GM10248 (cell line): ENCODE measurements at regions of chr12 and their contacts with region 1.

Region 1: DNA sequence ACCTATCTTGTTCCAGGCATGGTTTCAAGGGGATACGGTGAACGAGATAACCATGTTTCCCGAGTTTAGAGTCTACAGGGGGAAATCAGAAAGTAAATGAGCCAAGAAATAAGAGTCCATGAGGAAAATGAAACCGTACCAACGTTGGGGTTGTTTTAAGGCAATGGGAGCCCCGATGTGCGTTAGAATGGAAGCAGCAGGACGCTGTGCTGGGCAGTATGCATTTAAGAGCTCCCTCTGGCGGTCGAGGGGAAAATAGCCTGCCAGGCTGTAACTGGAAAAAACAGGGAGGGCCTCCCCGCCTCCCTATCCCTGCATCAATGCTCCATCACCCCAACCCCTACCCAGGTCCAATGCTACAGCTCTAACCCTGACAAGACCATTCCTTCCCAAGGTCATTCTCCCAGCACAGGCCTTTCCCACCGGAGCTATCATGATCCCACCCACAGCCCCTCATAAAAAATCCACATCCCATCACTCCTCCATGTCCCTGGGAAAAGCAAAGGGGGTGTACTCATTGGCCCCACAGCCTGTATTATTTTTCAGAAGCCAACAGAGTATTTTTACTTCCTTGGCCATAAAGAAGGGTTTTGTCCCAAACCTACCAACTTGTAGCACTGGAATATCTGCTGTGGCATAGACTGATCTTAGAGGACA is 226.3 kb upstream of the NOS1 start:
- DNase-seq: peak; percentile 68
- CTCF ChIP-seq: peak; percentile 83

Region 2: GRCh38 chr12:117236456-117237001 is 351.2 kb before region 1 on chr12:
- CTCF ChIA-PET with region 1: interaction called, 23 read pairs
- POLR2A ChIA-PET with region 1: no interaction called
- DNase-seq: peak; percentile 75
- CTCF ChIP-seq: peak; percentile 68

Region 3: DNA sequence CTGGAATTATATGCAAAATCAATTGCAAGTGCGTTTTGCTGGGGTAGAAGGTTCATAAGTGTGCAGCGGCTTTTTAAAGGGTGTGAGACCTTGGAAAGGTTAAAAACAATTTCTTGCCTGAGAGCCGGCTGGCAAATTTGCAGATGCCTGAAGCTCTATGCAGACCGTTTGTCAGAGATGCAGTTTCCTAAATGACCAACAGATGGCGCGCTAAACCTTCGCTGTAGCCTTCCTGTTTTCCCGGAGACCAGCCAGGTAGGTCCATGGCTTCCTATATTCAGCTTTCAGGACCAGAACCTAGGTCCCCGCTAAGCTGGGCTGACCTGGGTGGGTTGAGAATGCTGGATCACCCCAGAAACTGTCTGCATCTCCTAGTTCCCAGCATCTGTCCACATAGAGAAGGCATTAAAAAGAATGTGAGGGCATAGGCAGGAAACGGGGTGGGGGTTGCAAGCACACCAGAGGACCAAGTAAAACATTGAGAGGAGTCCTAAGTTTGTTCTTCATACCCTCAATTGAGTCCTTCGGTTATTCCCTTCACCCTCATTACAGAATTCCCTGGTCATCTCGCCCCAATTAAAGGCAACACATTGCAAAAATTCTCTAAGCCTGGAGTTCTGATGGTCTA is 220.6 kb before region 1 on chr12:
- CTCF ChIA-PET with region 1: interaction called, 82 read pairs
- POLR2A ChIA-PET with region 1: no interaction called
- DNase-seq: peak; percentile 75
- CTCF ChIP-seq: peak; percentile 79

Region 4: GRCh38 chr12:117540011-117540410 is 47.7 kb before region 1 on chr12:
- CTCF ChIA-PET with region 1: interaction called, 10 read pairs
- POLR2A ChIA-PET with region 1: no interaction called
- DNase-seq: no peak
- CTCF ChIP-seq: no peak

Region 5: DNA sequence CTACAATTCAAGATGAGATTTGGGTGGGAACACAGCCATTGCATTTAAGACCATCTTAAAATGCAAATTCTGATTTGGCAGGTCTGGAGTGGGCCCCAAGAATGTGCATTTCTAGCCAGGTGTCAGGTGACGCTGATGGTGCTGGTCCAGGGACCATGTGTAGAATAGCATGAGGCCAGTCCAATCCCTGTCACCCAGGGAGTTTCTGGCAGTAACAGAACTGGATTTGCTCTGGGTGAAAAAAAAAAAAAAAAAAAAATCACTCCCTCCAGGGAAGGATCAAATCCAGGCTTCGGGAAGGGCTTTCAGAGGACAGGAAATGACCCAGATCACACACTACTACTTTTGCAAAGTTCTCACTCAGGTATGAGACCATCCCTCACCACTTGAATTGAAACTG is 13.1 kb before region 1 on chr12:
- CTCF ChIA-PET with region 1: interaction called, 17 read pairs
- POLR2A ChIA-PET with region 1: no interaction called
- DNase-seq: no peak
- CTCF ChIP-seq: no peak

Region 6: DNA sequence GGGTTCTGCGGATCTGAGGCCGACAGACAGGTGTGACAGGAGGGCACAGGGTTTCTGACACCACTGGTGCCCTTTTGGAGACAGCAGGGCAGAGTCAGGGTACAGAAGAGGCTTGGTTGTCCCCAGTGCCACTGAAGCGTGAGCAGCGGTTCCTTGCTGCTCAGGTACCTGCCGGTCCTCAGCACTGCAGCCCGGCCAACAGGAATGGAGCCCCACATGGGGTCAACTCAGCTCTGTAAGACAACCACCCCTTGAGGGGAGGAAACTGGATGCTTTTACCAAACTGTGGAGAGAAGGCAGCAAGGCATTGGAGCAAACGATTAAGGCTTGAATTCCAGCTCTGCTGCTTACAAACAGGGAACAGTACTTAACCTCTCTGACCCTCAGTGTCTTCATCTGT is 20.0 kb after region 1 on chr12:
- CTCF ChIA-PET with region 1: interaction called, 17 read pairs
- POLR2A ChIA-PET with region 1: no interaction called
- DNase-seq: no peak
- CTCF ChIP-seq: no peak

Region 7: DNA sequence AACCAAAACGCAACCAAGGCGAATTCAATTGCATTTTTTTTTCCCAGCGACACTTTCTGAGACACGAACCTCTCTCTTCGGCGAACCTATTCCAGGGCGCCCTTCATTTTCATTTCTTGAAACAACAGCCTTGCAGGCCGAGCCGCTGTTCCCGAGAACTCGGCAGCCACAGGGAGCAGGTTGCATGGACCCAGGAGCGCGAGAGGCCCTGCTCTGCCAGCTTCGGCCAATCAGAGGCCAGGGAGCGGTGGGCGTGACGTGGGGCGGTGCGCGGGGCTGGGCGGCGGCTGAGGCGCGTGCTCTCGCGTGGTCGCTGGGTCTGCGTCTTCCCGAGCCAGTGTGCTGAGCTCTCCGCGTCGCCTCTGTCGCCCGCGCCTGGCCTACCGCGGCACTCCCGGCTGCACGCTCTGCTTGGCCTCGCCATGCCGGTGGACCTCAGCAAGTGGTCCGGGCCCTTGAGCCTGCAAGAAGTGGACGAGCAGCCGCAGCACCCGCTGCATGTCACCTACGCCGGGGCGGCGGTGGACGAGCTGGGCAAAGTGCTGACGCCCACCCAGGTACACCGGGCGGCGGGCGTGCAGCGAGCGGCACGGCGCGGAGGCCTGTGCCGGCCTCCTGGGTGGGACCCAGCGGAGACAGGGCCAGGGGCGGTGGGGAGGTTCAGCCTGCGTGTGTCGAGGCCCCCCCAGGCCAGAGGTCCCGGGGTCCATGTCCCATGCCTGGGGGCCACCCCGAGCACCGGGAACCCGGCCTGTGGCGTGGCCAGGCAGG is 548.2 kb after region 1 on chr12 and contains the start of gene PEBP1:
- CTCF ChIA-PET with region 1: no interaction called
- POLR2A ChIA-PET with region 1: no interaction called
- DNase-seq: peak; percentile 97
- CTCF ChIP-seq: peak; percentile 1